Spleen (tissue), 13 donors: ENCODE measurements at regions of chr1 and their contacts with region 1.

Region 1: DNA sequence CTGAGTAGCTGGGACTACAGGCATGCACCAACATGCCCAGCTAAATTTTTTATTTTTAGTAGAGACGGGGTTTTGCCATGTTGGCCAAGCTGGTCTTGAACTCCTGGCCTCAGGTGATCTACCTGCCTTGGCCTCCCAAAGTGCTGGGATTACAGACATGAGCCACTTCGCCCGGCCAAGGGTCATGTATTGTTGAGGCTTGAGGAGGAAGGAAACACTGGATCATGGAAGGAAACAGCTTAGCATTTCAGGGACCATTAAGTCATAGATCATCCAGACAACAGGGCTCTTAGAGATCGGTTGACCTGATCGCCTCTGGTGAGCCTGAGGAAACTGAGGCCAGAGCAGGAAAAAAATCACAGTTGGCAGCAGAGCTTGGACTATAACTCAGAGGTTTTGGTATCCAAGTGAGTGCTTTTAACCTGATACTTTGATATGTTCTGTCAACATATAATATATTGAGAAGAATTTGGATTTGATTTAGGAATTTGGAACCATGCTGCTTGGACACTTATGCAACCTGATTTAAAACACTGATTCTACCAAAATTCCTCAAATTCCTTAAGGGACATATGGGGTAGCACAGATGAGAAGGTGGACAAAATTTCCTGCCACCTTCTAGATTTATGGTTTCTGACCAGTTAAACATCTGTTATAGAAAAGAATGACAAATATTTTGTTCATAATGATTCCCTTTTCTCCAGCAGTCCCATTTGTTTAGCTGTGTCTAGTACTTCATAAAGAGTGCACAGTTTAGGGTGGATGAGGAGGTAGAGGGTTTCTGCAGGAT is 13.1 kb upstream of the BMP8A start:
- DNase-seq: no peak
- H3K4me3 ChIP-seq: no peak overlapping the region
- H3K27ac ChIP-seq: no peak overlapping the region
- H3K4me1 ChIP-seq: peaks cover 0 to 7% (median 0%) of the 10 kb centered on the region in 6 donors
- H3K27me3 ChIP-seq: no peaks in the 10 kb centered on the region
- CTCF ChIP-seq: no peak
- POLR2A ChIP-seq: no peak

Region 2: GRCh38 chr1:39538588-39539465 is 60.5 kb after region 1 on chr1:
- intact Hi-C with region 1: loop called (anchors 10 kb)
- DNase-seq: peak; percentile 78
- H3K4me3 ChIP-seq: no peak overlapping the region
- H3K27ac ChIP-seq: no peak overlapping the region
- H3K4me1 ChIP-seq: peaks cover 0 to 12% (median 7%) of the 10 kb centered on the region in 6 donors
- H3K27me3 ChIP-seq: no peaks in the 10 kb centered on the region
- CTCF ChIP-seq: peak; percentile 48 to 88 (median 80)
- POLR2A ChIP-seq: no peak